ENCODE measurements at regions of chrX and their contacts with region 1.

Region 1: DNA sequence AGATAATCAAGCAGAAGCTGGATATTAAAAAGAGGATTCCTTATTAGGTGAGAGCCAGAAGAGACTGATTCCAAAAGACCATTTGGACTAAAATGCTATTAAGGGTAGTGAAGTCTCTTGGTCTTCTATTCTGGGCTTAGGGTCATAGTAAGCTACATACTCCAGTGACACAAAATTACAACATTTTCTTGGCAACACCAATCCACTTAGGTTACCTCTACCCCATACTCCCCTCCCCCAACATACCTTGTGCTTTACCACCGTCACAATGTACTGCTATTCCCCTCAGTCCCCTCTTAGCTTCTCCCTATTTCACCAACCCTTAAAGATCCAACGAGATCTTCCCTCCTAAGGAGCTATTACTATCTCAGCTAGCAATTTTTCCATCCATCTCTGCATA is 11.4 kb downstream of the RLIM start:
- DNase-seq: no peak
- ATAC-seq: no peak
- H3K4me3 Mint-ChIP-seq: no peak overlapping the region
- H3K27ac Mint-ChIP-seq: peak overlapping the region; percentile 38
- H3K4me1 Mint-ChIP-seq: peaks cover 53% of the 10 kb centered on the region
- H3K27me3 Mint-ChIP-seq: no peaks in the 10 kb centered on the region
- CTCF ChIP-seq: no peak

Region 2: GRCh38 chrX:74614093-74614909 is 11.3 kb after region 1 on chrX and contains the start of gene RLIM:
- CTCF ChIA-PET with region 1: no interaction called
- POLR2A ChIA-PET with region 1: interaction called, 15 read pairs
- intact Hi-C with region 1: no loop called
- DNase-seq: peak; percentile 94
- ATAC-seq: peak; percentile 91
- H3K4me3 Mint-ChIP-seq: peak within 1 kb of the TSS; percentile 98
- H3K27ac Mint-ChIP-seq: peak within 1 kb of the TSS; percentile 99
- H3K4me1 Mint-ChIP-seq: peaks cover 10% of the 10 kb centered on the region
- H3K27me3 Mint-ChIP-seq: no peaks in the 10 kb centered on the region
- CTCF ChIP-seq: no peak
- total RNA-seq, gene RLIM: 40.0 to 42.0 TPM

Measured in activated CD8-positive, alpha-beta T cell treated with anti-CD3 and anti-CD28 coated beads for 36 hours (primary cell).